Transverse colon (tissue), 4 donors: ENCODE measurements at regions of chr13 and their contacts with region 1.

Region 1: GRCh38 chr13:23959231-23959862 is 62.0 kb upstream of the C1QTNF9B start:
- DNase-seq: no peak
- H3K4me3 ChIP-seq: no peak overlapping the region
- H3K27ac ChIP-seq: no peak overlapping the region
- H3K4me1 ChIP-seq: peaks cover 4 to 25% (median 6%) of the 10 kb centered on the region in 4 donors
- H3K27me3 ChIP-seq: no peaks in the 10 kb centered on the region
- CTCF ChIP-seq: no peak
- EP300 ChIP-seq: no peak
- POLR2A ChIP-seq: no peak

Region 2: GRCh38 chr13:23050126-23050525 is 909.2 kb before region 1 on chr13:
- in situ Hi-C with region 1: no loop called
- intact Hi-C with region 1: no loop called
- DNase-seq: no peak
- H3K4me3 ChIP-seq: no peak overlapping the region
- H3K27ac ChIP-seq: no peak overlapping the region
- H3K4me1 ChIP-seq: no peaks in the 10 kb centered on the region
- H3K27me3 ChIP-seq: no peaks in the 10 kb centered on the region
- CTCF ChIP-seq: no peak
- EP300 ChIP-seq: no peak
- POLR2A ChIP-seq: no peak

Region 3: DNA sequence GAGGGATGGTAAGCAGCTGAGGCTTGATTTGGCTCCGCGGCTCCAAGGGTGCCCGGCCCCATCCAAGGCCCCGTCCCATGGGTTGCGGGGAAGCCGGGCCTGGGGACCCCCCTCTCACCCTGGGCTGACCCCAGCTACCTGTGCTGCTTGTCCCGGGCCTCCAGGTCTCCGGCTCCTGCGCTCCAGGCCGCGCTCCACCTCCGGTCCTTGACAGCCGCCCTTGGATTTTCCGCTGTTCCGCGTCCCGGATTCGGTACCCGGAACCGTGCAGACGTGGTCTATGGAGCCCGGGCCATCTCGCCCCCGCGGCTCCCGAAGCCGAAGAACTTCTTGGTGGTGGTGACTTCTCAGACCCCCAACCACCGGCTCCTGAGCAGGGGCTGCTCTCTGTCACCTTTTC is 13.7 kb before region 1 on chr13:
- in situ Hi-C with region 1: no loop called
- intact Hi-C with region 1: loop called (anchors 1 kb)
- DNase-seq: no peak
- H3K4me3 ChIP-seq: no peak overlapping the region
- H3K27ac ChIP-seq: no peak overlapping the region
- H3K4me1 ChIP-seq: no peaks in the 10 kb centered on the region
- H3K27me3 ChIP-seq: peaks cover 7% of the 10 kb centered on the region
- CTCF ChIP-seq: no peak
- EP300 ChIP-seq: no peak
- POLR2A ChIP-seq: no peak